ENCODE measurements at regions of chr5 and their contacts with region 1.

Region 1: DNA sequence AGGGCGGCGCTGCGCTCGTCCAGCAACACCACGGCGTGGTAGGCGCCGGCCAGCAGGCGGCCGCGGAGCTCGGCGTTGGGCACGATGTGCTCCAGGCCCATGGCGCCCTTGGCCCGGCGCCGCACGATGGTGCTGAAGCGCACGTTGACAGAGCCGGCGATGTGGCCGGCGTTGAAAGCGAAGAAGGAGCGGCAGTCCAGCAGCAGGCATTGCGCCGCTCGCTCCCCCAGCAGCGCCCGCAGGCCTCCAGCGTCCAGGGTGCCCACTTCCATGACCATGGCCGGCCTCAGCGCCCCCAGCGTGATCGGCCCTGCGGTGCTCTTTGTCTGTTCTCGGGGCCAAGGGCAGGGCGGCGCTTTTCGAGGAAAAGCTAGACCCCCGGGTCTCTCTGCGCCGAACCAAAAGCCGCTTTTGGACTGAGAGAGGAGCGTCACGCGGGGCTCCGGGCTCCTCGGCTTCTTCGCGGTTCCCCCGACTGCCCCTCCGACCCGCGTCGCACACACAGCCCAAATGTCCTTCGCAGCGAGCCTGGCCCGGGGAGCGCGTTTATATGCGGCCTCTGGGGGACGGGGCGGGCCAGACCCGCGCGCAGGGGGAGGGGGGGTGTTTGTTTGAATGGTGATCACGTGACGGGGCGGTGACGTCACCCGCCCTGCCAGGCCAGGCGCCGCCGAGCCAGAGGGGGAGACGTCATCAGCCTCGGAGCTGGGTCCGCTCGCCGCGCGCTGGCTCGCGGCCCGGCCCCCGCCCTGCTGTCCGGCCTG is at the start of gene DUSP1:
- DNase-seq: peak; percentile 97
- H3K4me3 Mint-ChIP-seq: peak within 1 kb of the TSS; percentile 86
- H3K27ac Mint-ChIP-seq: peak within 1 kb of the TSS; percentile 95
- H3K4me1 Mint-ChIP-seq: peaks cover 44% of the 10 kb centered on the region
- H3K27me3 Mint-ChIP-seq: no peaks in the 10 kb centered on the region
- total RNA-seq, gene DUSP1: 17.0 to 18.8 TPM

Region 2: DNA sequence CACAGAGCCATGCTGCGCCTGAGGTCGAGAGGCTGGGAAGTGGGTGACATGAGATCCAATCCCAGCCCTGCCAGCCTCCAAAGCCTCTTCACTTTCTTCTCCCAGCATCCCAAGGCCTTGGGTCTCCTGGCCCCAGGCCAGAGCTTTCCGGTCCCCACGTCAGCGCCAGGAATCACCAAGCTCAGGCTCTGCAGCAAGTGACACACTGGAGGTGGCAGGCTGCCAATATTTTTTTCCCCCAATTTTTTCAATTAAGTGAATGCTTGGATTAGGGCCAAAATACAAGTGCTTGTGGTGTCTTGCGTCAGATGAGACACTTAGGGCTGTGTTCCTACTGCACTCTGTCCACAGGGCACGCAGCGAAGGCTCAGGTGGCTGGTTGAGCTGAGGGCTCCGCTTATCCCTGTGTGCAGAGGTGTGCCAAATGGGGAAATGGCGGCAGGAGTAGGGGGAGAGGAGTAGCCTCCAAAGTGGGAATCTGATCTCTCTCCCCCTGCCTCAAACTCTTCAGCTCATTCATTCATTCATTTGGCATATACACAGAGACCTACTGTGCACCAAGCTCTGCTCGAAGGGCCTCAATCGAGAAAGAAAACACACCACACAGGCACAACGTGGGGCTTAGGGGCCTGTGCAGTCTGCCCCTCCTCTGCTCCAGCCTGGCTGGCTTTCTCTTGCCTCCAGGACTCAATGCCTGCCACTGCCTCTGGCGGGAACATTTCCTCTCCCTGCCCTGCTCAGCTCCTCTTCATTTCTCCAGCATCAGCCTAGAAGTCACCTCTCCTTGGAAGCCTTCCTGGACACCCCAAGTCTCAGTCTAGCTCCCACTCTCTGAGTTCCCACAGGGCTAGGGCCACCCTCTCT is 333.2 kb before region 1 on chr5:
- CTCF ChIA-PET with region 1: no interaction called
- POLR2A ChIA-PET with region 1: no interaction called
- DNase-seq: no peak
- H3K4me3 Mint-ChIP-seq: no peak overlapping the region
- H3K27ac Mint-ChIP-seq: no peak overlapping the region
- H3K4me1 Mint-ChIP-seq: peaks cover 2% of the 10 kb centered on the region
- H3K27me3 Mint-ChIP-seq: peaks cover 5% of the 10 kb centered on the region

Region 3: GRCh38 chr5:172714491-172715421 is 56.1 kb before region 1 on chr5:
- CTCF ChIA-PET with region 1: interaction called, 29 read pairs
- POLR2A ChIA-PET with region 1: interaction called, 22 read pairs
- DNase-seq: peak; percentile 66
- H3K4me3 Mint-ChIP-seq: no peak overlapping the region
- H3K27ac Mint-ChIP-seq: no peak overlapping the region
- H3K4me1 Mint-ChIP-seq: peaks cover 6% of the 10 kb centered on the region
- H3K27me3 Mint-ChIP-seq: peaks cover 10% of the 10 kb centered on the region

Region 4: GRCh38 chr5:172721301-172722130 is 49.3 kb before region 1 on chr5:
- CTCF ChIA-PET with region 1: interaction called, 18 read pairs
- POLR2A ChIA-PET with region 1: interaction called, 8 read pairs
- DNase-seq: no peak
- H3K4me3 Mint-ChIP-seq: no peak overlapping the region
- H3K27ac Mint-ChIP-seq: no peak overlapping the region
- H3K4me1 Mint-ChIP-seq: peaks cover 18% of the 10 kb centered on the region
- H3K27me3 Mint-ChIP-seq: peaks cover 15% of the 10 kb centered on the region

Region 5: DNA sequence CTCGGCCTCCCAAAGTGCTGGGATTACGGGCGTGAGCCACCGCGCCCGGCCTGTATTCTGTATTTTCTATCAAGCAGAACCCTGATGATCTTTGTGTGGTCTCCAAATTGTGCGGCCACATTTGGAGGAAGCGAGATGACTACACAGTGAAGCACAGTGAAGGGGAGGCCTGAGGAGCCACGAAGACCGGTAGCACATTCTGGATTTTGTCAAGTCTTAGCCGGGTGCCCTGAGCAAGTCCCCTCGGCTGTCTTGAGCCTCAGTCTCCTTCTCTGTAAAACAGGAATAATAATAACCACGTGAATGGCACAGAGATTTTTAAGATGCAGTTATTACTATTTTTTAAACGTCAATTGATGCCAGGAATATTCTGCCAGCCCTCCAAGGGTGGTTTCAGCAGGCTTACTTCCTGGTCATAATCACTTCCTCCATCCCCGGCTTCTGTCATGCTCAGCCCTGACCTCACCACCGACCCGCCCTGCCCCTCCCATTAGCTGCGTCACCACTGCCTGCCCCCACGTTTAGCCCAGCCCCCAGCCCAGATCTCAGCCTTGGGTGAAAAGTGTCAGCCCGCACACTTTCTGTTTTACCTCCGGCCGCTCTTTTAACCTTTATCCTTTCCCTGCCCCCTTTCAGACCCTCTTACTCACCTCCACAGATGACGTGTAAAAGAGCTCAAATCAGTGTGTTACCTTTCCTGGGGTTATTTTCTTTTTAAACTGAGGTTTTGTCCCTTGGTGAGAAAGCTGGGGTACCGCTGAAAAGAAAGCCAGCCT is 36.2 kb after region 1 on chr5:
- CTCF ChIA-PET with region 1: interaction called, 21 read pairs
- POLR2A ChIA-PET with region 1: interaction called, 20 read pairs
- DNase-seq: peak; percentile 92
- H3K4me3 Mint-ChIP-seq: peak overlapping the region; percentile 70
- H3K27ac Mint-ChIP-seq: peak overlapping the region; percentile 74
- H3K4me1 Mint-ChIP-seq: peaks cover 16% of the 10 kb centered on the region
- H3K27me3 Mint-ChIP-seq: peaks cover 2% of the 10 kb centered on the region

Region 6: DNA sequence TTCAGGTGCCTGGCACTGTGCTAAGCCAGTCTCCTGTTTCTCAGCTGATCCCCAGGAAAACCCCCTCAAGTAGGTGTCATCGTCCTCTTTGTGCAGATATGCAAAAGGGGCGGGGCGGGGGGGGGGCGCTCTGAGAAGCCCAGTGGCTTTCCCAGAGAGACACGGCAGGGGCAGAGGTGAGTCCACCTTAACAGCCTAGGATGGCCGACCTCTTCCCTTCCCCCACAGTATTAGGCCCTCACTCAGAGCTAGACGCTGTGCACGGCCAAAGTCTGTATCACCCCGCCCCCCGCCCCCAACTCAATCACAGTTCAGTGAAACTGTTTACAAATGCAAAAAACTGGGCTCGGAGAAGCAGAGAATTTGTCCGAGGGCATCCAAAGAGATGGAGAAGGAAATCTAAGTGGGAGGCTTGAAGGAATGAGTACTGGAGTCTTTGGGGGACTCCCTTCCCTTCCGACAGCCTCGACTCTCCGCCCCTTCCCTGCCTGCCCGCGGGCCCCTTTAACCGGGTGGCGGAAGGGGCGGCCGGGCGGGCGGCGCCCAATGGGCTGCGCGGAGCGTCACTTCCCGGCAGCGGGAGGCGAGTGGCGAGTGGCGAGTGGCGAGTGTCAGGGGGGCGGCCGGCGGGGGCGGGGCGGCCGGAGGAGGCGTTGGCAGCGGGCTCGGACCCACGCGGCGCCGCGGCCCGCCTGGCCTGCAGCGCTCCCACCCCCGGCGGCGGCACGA is 63.0 kb after region 1 on chr5 and contains the start of gene ERGIC1:
- CTCF ChIA-PET with region 1: interaction called, 7 read pairs
- POLR2A ChIA-PET with region 1: interaction called, 26 read pairs
- DNase-seq: peak; percentile 77
- H3K4me3 Mint-ChIP-seq: peak within 1 kb of the TSS; percentile 78
- H3K27ac Mint-ChIP-seq: peak within 1 kb of the TSS; percentile 75
- H3K4me1 Mint-ChIP-seq: peaks cover 46% of the 10 kb centered on the region
- H3K27me3 Mint-ChIP-seq: no peaks in the 10 kb centered on the region
- total RNA-seq, gene ERGIC1: 36.1 to 37.2 TPM

Region 7: DNA sequence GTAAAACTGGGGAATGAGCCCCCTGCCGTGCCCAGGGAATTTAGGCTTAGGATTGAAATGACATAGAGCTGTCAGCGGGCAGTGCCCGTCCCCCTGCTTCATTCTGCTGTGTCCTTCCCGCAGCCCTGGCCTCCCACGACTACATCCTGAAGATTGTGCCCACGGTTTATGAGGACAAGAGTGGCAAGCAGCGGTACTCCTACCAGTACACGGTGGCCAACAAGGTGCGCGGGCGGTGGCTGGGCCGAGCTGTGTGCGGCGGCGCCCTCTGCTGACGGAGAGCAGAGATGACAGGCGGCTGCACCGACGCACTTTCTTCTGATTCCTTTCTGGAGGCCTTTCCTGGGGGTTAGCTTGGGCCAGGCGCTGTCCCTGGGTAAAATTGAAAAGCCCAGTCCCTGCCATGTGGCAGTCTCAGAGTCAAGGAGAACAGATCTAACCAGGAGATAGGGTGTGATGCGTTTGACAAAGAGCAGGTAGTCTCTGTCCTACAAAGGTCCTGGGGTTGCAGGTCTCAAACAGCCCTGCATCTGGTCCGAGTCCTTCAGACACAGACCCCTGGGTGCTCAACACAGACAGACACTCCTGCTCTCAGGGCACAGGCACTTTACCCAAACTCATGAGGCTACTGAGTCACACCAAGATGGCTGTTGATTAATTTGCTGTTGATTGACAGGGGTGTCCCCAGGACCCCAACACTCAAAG is 161.6 kb after region 1 on chr5:
- CTCF ChIA-PET with region 1: interaction called, 9 read pairs
- POLR2A ChIA-PET with region 1: interaction called, 11 read pairs
- DNase-seq: peak; percentile 74
- H3K4me3 Mint-ChIP-seq: no peak overlapping the region
- H3K27ac Mint-ChIP-seq: no peak overlapping the region
- H3K4me1 Mint-ChIP-seq: no peaks in the 10 kb centered on the region
- H3K27me3 Mint-ChIP-seq: no peaks in the 10 kb centered on the region

Region 8: GRCh38 chr5:172958331-172959046 is 187.6 kb after region 1 on chr5:
- CTCF ChIA-PET with region 1: interaction called, 8 read pairs
- POLR2A ChIA-PET with region 1: interaction called, 13 read pairs
- DNase-seq: peak; percentile 72
- H3K4me3 Mint-ChIP-seq: peak overlapping the region; percentile 87
- H3K27ac Mint-ChIP-seq: peak overlapping the region; percentile 91
- H3K4me1 Mint-ChIP-seq: peaks cover 26% of the 10 kb centered on the region
- H3K27me3 Mint-ChIP-seq: peaks cover 8% of the 10 kb centered on the region

Measured in activated CD4-positive, alpha-beta memory T cell treated with anti-CD3 and anti-CD28 coated beads, Interleukin-2, amount 10 ng/mL, durations not matched to agents 7 days and 5 days (primary cell).